Adrenal gland (tissue), 19 donors: ENCODE measurements at regions of chr5 and their contacts with region 1.

Region 1: DNA sequence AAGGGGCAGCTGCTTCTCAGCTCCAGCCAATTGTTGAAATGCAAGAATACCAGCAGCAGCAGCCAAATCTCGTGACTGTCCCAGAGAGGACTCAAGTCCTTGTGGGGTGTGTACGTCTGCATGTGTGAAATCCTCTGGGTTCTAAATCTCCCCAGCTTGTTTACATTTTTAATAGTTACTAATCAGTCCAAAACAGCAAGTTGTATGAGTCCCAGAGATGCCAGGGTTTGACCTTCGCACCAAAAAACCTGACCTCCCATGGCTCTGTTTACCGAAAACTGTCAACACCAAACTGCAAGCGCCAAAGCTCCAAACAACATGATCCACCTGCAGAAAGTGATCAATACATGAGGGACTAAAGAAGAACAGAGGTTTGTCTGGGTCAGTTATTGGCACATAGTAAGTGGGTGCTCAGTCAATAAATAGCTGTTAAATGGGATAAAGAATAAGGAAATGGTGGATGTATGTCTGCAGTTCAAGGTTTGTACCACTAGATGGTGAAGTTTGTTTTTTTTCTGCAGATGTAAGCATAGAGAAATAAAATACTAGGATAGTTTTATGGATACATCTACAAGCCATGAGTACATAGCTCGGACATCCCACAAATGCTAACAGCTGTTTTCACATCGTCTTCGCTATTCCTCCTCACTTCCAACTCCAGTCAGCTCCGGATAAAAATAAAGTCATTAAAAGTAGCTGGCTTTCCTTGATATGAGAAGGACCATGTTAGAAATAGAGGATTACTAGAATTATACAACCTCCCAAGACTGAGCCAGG is 85.3 kb upstream of the ADRB2 start:
- DNase-seq: peak in 1 of 7 donors; percentile 27
- H3K4me3 ChIP-seq: no peak overlapping the region
- H3K27ac ChIP-seq: no peak overlapping the region
- H3K4me1 ChIP-seq: no peaks in the 10 kb centered on the region
- H3K27me3 ChIP-seq: no peaks in the 10 kb centered on the region
- CTCF ChIP-seq: peak; percentile 62 to 85 (median 78)
- POLR2A ChIP-seq: no peak

Region 2: GRCh38 chr5:148457183-148457620 is 284.0 kb before region 1 on chr5:
- intact Hi-C with region 1: no loop called
- DNase-seq: no peak
- H3K4me3 ChIP-seq: no peak overlapping the region
- H3K27ac ChIP-seq: no peak overlapping the region
- H3K4me1 ChIP-seq: no peaks in the 10 kb centered on the region
- H3K27me3 ChIP-seq: no peaks in the 10 kb centered on the region
- CTCF ChIP-seq: peak in 1 of 6 experiments; percentile 9
- POLR2A ChIP-seq: no peak

Region 3: GRCh38 chr5:149035372-149035790 is 294.2 kb after region 1 on chr5:
- intact Hi-C with region 1: loop called (anchors 5 kb)
- DNase-seq: peak; percentile 66 to 90 (median 76)
- H3K4me3 ChIP-seq: no peak overlapping the region
- H3K27ac ChIP-seq: no peak overlapping the region
- H3K4me1 ChIP-seq: no peaks in the 10 kb centered on the region
- H3K27me3 ChIP-seq: peaks cover 4% of the 10 kb centered on the region
- CTCF ChIP-seq: peak; percentile 68 to 84 (median 76)
- POLR2A ChIP-seq: no peak

Region 4: DNA sequence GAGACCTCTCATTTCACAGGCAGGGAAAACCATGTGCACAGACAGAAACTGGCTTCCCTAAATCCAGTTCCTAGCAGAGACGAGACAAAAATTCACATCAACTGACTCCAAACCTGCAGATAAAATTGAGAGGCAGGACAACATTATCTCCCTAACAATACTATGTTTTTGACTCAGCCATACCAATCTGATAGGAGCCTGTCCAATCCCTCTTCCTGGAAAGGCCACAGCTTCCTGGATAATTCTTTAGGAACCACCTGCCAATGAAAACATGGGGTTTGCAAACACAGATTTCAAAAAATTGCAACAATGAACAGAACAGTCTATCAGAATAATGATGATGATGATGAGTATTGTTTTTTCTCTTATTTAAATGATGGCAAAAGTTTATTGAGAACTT is 299.3 kb after region 1 on chr5:
- intact Hi-C with region 1: loop called (anchors 5 kb)
- DNase-seq: no peak
- H3K4me3 ChIP-seq: no peak overlapping the region
- H3K27ac ChIP-seq: peak overlapping the region in 1 of 5 donors; percentile 49
- H3K4me1 ChIP-seq: no peaks in the 10 kb centered on the region
- H3K27me3 ChIP-seq: peaks cover 4% of the 10 kb centered on the region
- CTCF ChIP-seq: no peak
- POLR2A ChIP-seq: no peak

Region 5: GRCh38 chr5:149114403-149115312 is 373.5 kb after region 1 on chr5:
- intact Hi-C with region 1: loop called (anchors 5 to 10 kb)
- DNase-seq: peak; percentile 58 to 84 (median 66)
- H3K4me3 ChIP-seq: no peak overlapping the region
- H3K27ac ChIP-seq: no peak overlapping the region
- H3K4me1 ChIP-seq: no peaks in the 10 kb centered on the region
- H3K27me3 ChIP-seq: no peaks in the 10 kb centered on the region
- CTCF ChIP-seq: peak; percentile 45 to 77 (median 69)
- POLR2A ChIP-seq: no peak